MCF 10A (cell line): ENCODE measurements at regions of chr19 and their contacts with region 1.

Region 1: DNA sequence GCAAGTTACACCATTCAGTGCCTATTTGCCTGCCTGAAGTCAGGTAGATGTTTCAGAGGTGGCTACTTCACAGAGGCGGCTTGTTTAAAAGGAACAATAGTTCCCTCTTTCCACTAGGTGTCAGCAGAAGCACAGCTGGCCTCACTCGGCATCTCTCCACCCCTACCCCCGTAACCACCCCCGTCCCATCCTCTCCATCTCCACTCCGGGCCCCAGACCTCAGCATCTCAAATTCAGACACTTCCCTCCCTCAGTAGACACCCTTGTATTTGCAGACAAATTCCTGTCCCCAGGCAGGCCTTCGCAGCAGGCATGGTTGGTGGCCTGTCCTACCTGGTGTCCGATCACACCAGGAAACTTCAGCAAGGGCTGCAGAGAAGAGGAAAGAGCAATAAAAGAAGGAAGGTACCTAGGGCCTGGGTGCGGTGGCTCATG is 9.1 kb upstream of the DPP9 start:
- DNase-seq: peak; percentile 73
- H3K4me3 Mint-ChIP-seq: no peak overlapping the region
- H3K27ac Mint-ChIP-seq: no peak overlapping the region
- H3K4me1 Mint-ChIP-seq: peaks cover 5% of the 10 kb centered on the region
- H3K27me3 Mint-ChIP-seq: peaks cover 12% of the 10 kb centered on the region
- CTCF ChIP-seq: peak; percentile 84

Region 2: GRCh38 chr19:4759388-4760284 is 26.9 kb after region 1 on chr19:
- CTCF ChIA-PET with region 1: no interaction called
- POLR2A ChIA-PET with region 1: no interaction called
- intact Hi-C with region 1: no loop called
- DNase-seq: peak; percentile 84
- H3K4me3 Mint-ChIP-seq: peak overlapping the region; percentile 16
- H3K27ac Mint-ChIP-seq: no peak overlapping the region
- H3K4me1 Mint-ChIP-seq: no peaks in the 10 kb centered on the region
- H3K27me3 Mint-ChIP-seq: peaks cover 26% of the 10 kb centered on the region
- CTCF ChIP-seq: no peak

Region 3: GRCh38 chr19:4781801-4782200 is 49.1 kb after region 1 on chr19:
- CTCF ChIA-PET with region 1: interaction called, 11 read pairs
- POLR2A ChIA-PET with region 1: no interaction called
- intact Hi-C with region 1: no loop called
- DNase-seq: no peak
- H3K4me3 Mint-ChIP-seq: no peak overlapping the region
- H3K27ac Mint-ChIP-seq: no peak overlapping the region
- H3K4me1 Mint-ChIP-seq: no peaks in the 10 kb centered on the region
- H3K27me3 Mint-ChIP-seq: peaks cover 13% of the 10 kb centered on the region
- CTCF ChIP-seq: no peak

Region 4: GRCh38 chr19:4803736-4804695 is 71.3 kb after region 1 on chr19:
- CTCF ChIA-PET with region 1: interaction called, 22 read pairs
- POLR2A ChIA-PET with region 1: interaction called, 4 read pairs
- intact Hi-C with region 1: loop called (anchors 1 kb)
- DNase-seq: peak; percentile 70
- H3K4me3 Mint-ChIP-seq: no peak overlapping the region
- H3K27ac Mint-ChIP-seq: no peak overlapping the region
- H3K4me1 Mint-ChIP-seq: no peaks in the 10 kb centered on the region
- H3K27me3 Mint-ChIP-seq: no peaks in the 10 kb centered on the region
- CTCF ChIP-seq: peak; percentile 94